ENCODE measurements at regions of chr3 and their contacts with region 1.

Region 1: DNA sequence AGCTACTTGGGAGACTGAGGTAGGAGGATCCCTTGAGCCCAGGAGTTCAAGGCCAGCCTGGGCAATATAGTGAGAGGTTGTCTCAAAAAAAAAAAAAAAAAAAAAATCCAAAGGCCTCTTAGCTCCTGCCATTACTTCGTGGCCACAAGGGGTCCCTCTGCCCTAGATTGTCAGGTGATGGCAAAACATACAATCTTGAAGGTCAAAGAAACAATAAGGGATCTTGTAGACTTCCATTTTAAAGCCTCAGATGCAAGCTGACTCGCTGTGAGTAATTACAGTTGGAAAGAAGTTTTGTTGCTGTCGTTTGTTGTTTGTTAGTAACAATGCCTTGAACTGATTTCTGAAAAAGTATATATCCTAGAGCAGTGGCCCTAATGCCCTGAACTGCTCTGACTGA is 55.9 kb upstream of the PLCL2 start:
- DNase-seq: peak; percentile 45
- ATAC-seq: peak; percentile 89
- H3K4me3 Mint-ChIP-seq: no peak overlapping the region
- H3K27ac Mint-ChIP-seq: no peak overlapping the region
- H3K4me1 Mint-ChIP-seq: peaks cover 23% of the 10 kb centered on the region
- H3K27me3 Mint-ChIP-seq: no peaks in the 10 kb centered on the region
- CTCF ChIP-seq: peak; percentile 22; the same call in 1 of the 2 replicates

Region 2: DNA sequence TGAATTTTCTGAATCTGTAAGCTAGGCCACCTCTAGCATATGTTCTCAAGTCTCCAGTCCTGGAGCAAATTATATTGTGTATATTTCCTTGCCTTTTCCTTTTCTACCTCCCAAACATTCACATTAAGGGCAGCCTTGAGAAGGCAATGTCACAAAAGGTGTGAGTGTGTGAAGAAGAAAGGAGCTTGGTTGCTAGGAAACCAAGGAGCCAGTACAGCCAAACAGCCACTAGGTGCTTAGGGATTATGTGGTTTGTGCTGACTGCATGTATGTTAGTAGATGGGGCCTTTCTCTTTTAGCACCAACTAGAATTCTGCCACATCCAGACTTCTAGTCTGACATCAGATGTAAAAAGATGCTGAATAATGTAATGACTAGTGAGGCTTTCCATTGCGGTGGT is 104.8 kb before region 1 on chr3:
- CTCF ChIA-PET with region 1: interaction called, 11 read pairs
- POLR2A ChIA-PET with region 1: no interaction called
- DNase-seq: no peak
- ATAC-seq: peak; percentile 97
- H3K4me3 Mint-ChIP-seq: no peak overlapping the region
- H3K27ac Mint-ChIP-seq: no peak overlapping the region
- H3K4me1 Mint-ChIP-seq: peaks cover 20% of the 10 kb centered on the region
- H3K27me3 Mint-ChIP-seq: no peaks in the 10 kb centered on the region; the same call in 1 of the 2 replicates
- CTCF ChIP-seq: no peak

Region 3: GRCh38 chr3:16741103-16741758 is 87.6 kb before region 1 on chr3:
- CTCF ChIA-PET with region 1: no interaction called
- POLR2A ChIA-PET with region 1: no interaction called
- DNase-seq: no peak
- ATAC-seq: no peak
- H3K4me3 Mint-ChIP-seq: no peak overlapping the region
- H3K27ac Mint-ChIP-seq: no peak overlapping the region
- H3K4me1 Mint-ChIP-seq: peaks cover 12% of the 10 kb centered on the region
- H3K27me3 Mint-ChIP-seq: peaks cover 5% of the 10 kb centered on the region; the same call in 1 of the 2 replicates
- CTCF ChIP-seq: no peak

Region 4: GRCh38 chr3:16808393-16809107 is 20.3 kb before region 1 on chr3:
- CTCF ChIA-PET with region 1: interaction called, 18 read pairs
- POLR2A ChIA-PET with region 1: interaction called, 3 read pairs
- DNase-seq: no peak
- ATAC-seq: peak; percentile 29
- H3K4me3 Mint-ChIP-seq: no peak overlapping the region
- H3K27ac Mint-ChIP-seq: no peak overlapping the region
- H3K4me1 Mint-ChIP-seq: peaks cover 34% of the 10 kb centered on the region
- H3K27me3 Mint-ChIP-seq: peaks cover 8% of the 10 kb centered on the region
- CTCF ChIP-seq: no peak

Region 5: GRCh38 chr3:16842272-16843270 is 13.8 kb after region 1 on chr3:
- CTCF ChIA-PET with region 1: interaction called, 14 read pairs
- POLR2A ChIA-PET with region 1: no interaction called
- DNase-seq: peak; percentile 16
- ATAC-seq: peak; percentile 74
- H3K4me3 Mint-ChIP-seq: no peak overlapping the region
- H3K27ac Mint-ChIP-seq: peak overlapping the region; percentile 34; the same call in 1 of the 2 replicates
- H3K4me1 Mint-ChIP-seq: peaks cover 41% of the 10 kb centered on the region
- H3K27me3 Mint-ChIP-seq: no peaks in the 10 kb centered on the region
- CTCF ChIP-seq: no peak

Region 6: GRCh38 chr3:17030438-17030837 is 201.6 kb after region 1 on chr3:
- CTCF ChIA-PET with region 1: interaction called, 12 read pairs
- POLR2A ChIA-PET with region 1: no interaction called
- DNase-seq: no peak
- ATAC-seq: no peak
- H3K4me3 Mint-ChIP-seq: no peak overlapping the region
- H3K27ac Mint-ChIP-seq: no peak overlapping the region
- H3K4me1 Mint-ChIP-seq: peaks cover 35% of the 10 kb centered on the region
- H3K27me3 Mint-ChIP-seq: no peaks in the 10 kb centered on the region
- CTCF ChIP-seq: no peak